CD8-positive, alpha-beta T cell (primary cell): ENCODE measurements at regions of chr1 and their contacts with region 1.

Region 1: DNA sequence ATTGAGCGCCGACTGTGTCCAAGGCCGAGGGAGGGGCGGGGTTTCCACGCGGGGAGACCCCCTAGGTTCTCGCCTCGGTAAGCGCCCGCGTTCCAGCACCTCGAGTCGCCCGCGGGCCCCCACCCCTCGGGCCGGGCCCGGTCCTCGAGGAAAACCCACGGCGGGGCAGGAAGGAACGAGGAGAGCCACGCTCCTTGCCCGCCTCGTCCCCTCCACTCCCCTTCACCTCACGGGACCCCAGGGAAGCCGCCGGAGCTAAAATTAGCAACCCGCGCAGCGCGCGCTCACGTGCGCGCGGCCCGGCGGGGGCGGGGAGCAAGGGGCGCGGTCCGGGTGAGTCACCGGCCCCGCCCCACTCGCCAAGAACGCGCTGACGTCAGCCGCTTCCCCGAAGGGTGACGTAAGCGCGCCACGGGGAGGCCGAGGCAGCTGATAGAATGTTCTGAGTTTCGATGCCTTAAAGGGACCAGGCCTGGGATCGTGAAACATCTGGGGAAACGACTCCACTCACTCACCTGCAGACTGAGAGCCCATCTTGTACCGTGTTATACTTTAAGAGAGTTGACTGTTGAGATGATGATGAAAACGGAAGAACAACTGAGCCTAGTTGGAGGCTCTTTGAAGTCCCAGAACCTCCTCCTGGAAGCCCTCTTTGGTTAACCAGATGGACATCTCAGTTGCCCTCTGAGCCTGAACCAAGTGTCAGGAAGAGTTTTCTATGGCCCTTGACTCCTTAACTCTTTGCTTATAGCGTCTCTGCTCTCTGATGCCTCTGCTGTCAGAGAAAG is 49.7 kb upstream of the ATF3 start:
- DNase-seq: peak; percentile 83 to 97 (median 92)
- ATAC-seq: peak; percentile 96
- H3K4me3 ChIP-seq: peak overlapping the region; percentile 45 to 82
- H3K4me3 Mint-ChIP-seq: peak overlapping the region; percentile 85
- H3K27ac ChIP-seq: peak overlapping the region; percentile 76 to 95
- H3K27ac Mint-ChIP-seq: peak overlapping the region; percentile 94
- H3K4me1 ChIP-seq: peaks cover 5% of the 10 kb centered on the region
- H3K4me1 Mint-ChIP-seq: peaks cover 10% of the 10 kb centered on the region
- H3K27me3 ChIP-seq: peaks cover 0 to 3% of the 10 kb centered on the region in 2 experiments
- H3K27me3 Mint-ChIP-seq: no peaks in the 10 kb centered on the region
- CTCF ChIP-seq: no peak

Region 2: DNA sequence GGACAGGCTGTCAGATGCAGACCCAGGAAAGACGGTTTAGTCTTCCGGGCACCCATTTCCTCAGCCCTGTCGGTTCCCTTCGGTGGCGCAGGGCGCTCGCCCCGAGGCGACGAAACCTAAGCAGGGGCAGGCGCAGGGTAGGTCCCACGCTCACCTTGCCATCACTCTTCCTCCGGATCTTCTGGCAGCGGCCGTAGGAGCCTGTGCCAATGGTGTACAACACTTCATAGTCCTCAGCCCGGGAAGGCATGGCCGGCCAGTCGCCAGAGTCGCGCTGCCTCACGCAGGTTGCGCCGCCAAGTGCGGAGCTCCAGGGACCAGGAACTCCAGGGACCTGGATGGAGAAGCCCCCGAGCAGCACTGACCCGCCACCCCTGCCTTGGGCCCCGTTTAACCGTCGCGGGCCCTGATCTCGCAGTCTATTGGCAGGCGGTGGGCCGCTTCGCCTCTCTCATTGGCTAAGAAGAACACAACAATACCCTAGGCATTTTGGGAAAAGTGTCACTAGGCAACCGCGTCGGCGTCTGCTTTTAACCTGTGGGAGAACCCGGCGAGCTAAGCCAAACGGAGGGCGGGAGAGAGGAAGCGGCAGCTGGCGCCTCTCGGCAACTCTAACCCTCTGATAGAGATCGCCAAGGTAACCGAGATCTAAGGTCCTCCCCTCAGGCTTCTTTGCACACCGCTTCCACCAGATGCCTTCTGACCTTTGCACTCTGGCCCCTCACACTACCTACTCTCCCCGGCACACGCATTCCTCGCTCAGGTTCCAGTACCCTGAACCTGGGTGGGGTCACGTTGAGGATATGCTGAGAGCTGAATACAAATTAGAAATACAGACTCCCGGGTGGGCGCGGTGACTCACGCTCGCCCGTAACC is 883.4 kb before region 1 on chr1 and contains the start of gene NEK2:
- CTCF ChIA-PET with region 1: no interaction called
- POLR2A ChIA-PET with region 1: no interaction called
- intact Hi-C with region 1: loop called in 1 of 2 experiments (anchors 5 kb)
- DNase-seq: peak; percentile 61 to 92 (median 84)
- ATAC-seq: peak; percentile 89
- H3K4me3 ChIP-seq: peak within 1 kb of the TSS; percentile 67 to 85
- H3K4me3 Mint-ChIP-seq: peak within 1 kb of the TSS; percentile 91
- H3K27ac ChIP-seq: peak within 1 kb of the TSS; percentile 18 to 22
- H3K27ac Mint-ChIP-seq: peak within 1 kb of the TSS; percentile 76
- H3K4me1 ChIP-seq: peaks cover 7% of the 10 kb centered on the region
- H3K4me1 Mint-ChIP-seq: peaks cover 14% of the 10 kb centered on the region
- H3K27me3 ChIP-seq: no peaks in the 10 kb centered on the region
- H3K27me3 Mint-ChIP-seq: no peaks in the 10 kb centered on the region
- CTCF ChIP-seq: no peak
- total RNA-seq, gene NEK2: 0.19 to 0.35 TPM

Region 3: DNA sequence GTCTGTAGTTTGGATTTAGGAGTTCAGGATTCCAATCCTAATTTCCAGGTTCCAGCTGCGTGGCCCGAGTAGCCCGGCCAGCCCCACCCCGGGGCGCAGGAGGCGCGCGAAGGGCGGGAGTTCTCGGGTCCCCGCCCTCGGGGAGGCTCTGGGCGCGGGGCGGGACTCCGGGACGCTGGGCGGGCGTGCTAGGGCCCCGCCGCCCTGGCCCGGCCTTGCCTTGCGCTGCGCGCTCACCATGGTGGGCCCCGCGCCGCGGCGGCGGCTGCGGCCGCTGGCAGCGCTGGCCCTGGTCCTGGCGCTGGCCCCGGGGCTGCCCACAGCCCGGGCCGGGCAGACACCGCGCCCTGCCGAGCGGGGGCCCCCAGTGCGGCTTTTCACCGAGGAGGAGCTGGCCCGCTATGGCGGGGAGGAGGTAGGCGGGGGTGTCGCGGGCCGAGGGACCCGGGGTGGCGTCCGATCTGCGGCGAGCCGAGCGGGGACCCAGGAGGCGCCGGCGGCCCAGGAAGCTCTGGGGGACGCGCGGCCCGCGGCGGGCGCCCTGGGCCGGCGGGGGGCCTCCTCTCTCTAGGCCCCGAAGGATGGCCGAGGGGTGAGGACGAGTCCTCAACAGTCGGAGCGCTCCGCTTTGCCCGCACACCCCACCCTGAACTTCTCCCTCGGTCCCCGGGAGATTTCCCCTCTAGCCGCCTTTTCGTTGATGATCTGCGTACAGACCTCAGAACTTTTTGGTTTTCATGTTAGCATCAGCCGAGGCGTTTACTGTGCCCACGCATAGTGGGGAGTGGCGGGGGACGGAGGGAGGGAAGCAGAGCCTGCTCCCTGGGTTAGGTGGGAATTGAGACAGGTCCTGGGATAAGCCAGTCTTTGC is 125.9 kb before region 1 on chr1 and contains the start of gene NENF:
- CTCF ChIA-PET with region 1: no interaction called
- POLR2A ChIA-PET with region 1: interaction called, 3 read pairs
- intact Hi-C with region 1: loop called (anchors 1 to 5 kb)
- DNase-seq: peak; percentile 44 to 86 (median 70)
- ATAC-seq: peak; percentile 99
- H3K4me3 ChIP-seq: peak within 1 kb of the TSS; percentile 61 to 71
- H3K4me3 Mint-ChIP-seq: peak within 1 kb of the TSS; percentile 81
- H3K27ac ChIP-seq: peak within 1 kb of the TSS in 1 of 2 experiments; percentile 55
- H3K27ac Mint-ChIP-seq: peak within 1 kb of the TSS; percentile 74
- H3K4me1 ChIP-seq: peaks cover 17% of the 10 kb centered on the region
- H3K4me1 Mint-ChIP-seq: peaks cover 34% of the 10 kb centered on the region
- H3K27me3 ChIP-seq: no peaks in the 10 kb centered on the region
- H3K27me3 Mint-ChIP-seq: no peaks in the 10 kb centered on the region
- CTCF ChIP-seq: no peak
- total RNA-seq, gene NENF: 17.7 to 20.3 TPM

Region 4: DNA sequence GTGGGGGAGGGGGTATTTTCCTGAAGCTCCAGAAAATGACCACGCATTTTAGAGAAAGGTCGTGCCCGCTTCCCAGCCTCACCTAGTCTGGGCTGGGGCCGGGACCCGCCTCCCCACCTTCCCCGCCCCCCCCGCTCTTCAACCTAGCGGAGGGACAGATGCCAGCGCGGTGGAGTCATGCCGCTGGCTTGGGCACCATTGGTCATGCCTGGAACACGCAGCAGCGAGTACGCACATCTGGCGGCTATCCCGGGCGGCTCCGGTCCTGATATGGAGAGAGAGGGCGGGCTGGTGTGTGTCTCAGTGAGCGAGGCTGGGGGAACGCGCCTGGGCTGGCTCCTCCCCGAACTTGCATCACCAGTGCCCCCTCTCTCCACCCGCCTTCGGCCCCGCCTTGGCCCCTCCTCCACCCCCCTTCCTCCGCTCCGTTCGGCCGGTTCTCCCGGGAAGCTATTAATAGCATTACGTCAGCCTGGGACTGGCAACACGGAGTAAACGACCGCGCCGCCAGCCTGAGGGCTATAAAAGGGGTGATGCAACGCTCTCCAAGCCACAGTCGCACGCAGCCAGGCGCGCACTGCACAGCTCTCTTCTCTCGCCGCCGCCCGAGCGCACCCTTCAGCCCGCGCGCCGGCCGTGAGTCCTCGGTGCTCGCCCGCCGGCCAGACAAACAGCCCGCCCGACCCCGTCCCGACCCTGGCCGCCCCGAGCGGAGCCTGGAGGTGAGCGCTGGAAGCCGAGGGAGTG is 49.5 kb after region 1 on chr1 and contains the start of gene ATF3:
- CTCF ChIA-PET with region 1: no interaction called
- POLR2A ChIA-PET with region 1: no interaction called
- intact Hi-C with region 1: loop called (anchors 2 kb)
- DNase-seq: peak; percentile 62 to 91 (median 78)
- ATAC-seq: peak; percentile 73
- H3K4me3 ChIP-seq: peak within 1 kb of the TSS; percentile 75 to 86
- H3K4me3 Mint-ChIP-seq: peak within 1 kb of the TSS; percentile 94
- H3K27ac ChIP-seq: peak within 1 kb of the TSS in 1 of 2 experiments; percentile 31
- H3K27ac Mint-ChIP-seq: peak within 1 kb of the TSS; percentile 83
- H3K4me1 ChIP-seq: peaks cover 25% of the 10 kb centered on the region
- H3K4me1 Mint-ChIP-seq: peaks cover 22% of the 10 kb centered on the region
- H3K27me3 ChIP-seq: peaks cover 39 to 56% of the 10 kb centered on the region in 2 experiments
- H3K27me3 Mint-ChIP-seq: peaks cover 54% of the 10 kb centered on the region
- CTCF ChIP-seq: no peak
- total RNA-seq, gene ATF3: 8.9 to 10.4 TPM

Region 5: GRCh38 chr1:212857992-212858460 is 299.1 kb after region 1 on chr1 and contains the start of gene FLVCR1:
- CTCF ChIA-PET with region 1: no interaction called
- POLR2A ChIA-PET with region 1: no interaction called
- intact Hi-C with region 1: loop called (anchors 2 to 5 kb)
- DNase-seq: peak; percentile 72 to 95 (median 87)
- ATAC-seq: peak; percentile 95
- H3K4me3 ChIP-seq: peak within 1 kb of the TSS; percentile 82 to 89
- H3K4me3 Mint-ChIP-seq: peak within 1 kb of the TSS; percentile 96
- H3K27ac ChIP-seq: peak within 1 kb of the TSS; percentile 64
- H3K27ac Mint-ChIP-seq: peak within 1 kb of the TSS; percentile 91
- H3K4me1 ChIP-seq: peaks cover 24% of the 10 kb centered on the region
- H3K4me1 Mint-ChIP-seq: peaks cover 21% of the 10 kb centered on the region
- H3K27me3 ChIP-seq: no peaks in the 10 kb centered on the region
- H3K27me3 Mint-ChIP-seq: no peaks in the 10 kb centered on the region
- CTCF ChIP-seq: no peak
- total RNA-seq, gene FLVCR1: 6.5 to 6.6 TPM

Region 6: GRCh38 chr1:213051127-213051880 is 492.4 kb after region 1 on chr1 and contains the start of gene RPS6KC1:
- CTCF ChIA-PET with region 1: no interaction called
- POLR2A ChIA-PET with region 1: no interaction called
- intact Hi-C with region 1: loop called in 1 of 2 experiments (anchors 2 kb)
- DNase-seq: peak; percentile 53 to 90 (median 85)
- ATAC-seq: peak; percentile 94
- H3K4me3 ChIP-seq: peak within 1 kb of the TSS; percentile 95 to 99
- H3K4me3 Mint-ChIP-seq: peak within 1 kb of the TSS; percentile 93
- H3K27ac ChIP-seq: peak within 1 kb of the TSS; percentile 54 to 86
- H3K27ac Mint-ChIP-seq: peak within 1 kb of the TSS; percentile 95
- H3K4me1 ChIP-seq: peaks cover 15% of the 10 kb centered on the region
- H3K4me1 Mint-ChIP-seq: peaks cover 35% of the 10 kb centered on the region
- H3K27me3 ChIP-seq: peaks cover 0 to 4% of the 10 kb centered on the region in 2 experiments
- H3K27me3 Mint-ChIP-seq: peaks cover 15% of the 10 kb centered on the region
- CTCF ChIP-seq: no peak
- total RNA-seq, gene RPS6KC1: 5.3 to 5.6 TPM